Right cardiac atrium (tissue), 5 donors: ENCODE measurements at regions of chr3 and their contacts with region 1.

Region 1: GRCh38 chr3:30453360-30454039 is 152.9 kb upstream of the TGFBR2 start:
- DNase-seq: no peak
- ATAC-seq: peak; percentile 43 to 48
- H3K4me3 ChIP-seq: no peak overlapping the region
- H3K27ac ChIP-seq: no peak overlapping the region
- H3K4me1 ChIP-seq: peaks cover 1% of the 10 kb centered on the region
- H3K27me3 ChIP-seq: no peaks in the 10 kb centered on the region

Region 2: GRCh38 chr3:30347679-30348216 is 105.8 kb before region 1 on chr3:
- intact Hi-C with region 1: loop called in 1 of 4 experiments (anchors 10 kb)
- DNase-seq: no peak
- ATAC-seq: no peak
- H3K4me3 ChIP-seq: no peak overlapping the region
- H3K27ac ChIP-seq: no peak overlapping the region
- H3K4me1 ChIP-seq: peaks cover 1% of the 10 kb centered on the region
- H3K27me3 ChIP-seq: no peaks in the 10 kb centered on the region

Region 3: DNA sequence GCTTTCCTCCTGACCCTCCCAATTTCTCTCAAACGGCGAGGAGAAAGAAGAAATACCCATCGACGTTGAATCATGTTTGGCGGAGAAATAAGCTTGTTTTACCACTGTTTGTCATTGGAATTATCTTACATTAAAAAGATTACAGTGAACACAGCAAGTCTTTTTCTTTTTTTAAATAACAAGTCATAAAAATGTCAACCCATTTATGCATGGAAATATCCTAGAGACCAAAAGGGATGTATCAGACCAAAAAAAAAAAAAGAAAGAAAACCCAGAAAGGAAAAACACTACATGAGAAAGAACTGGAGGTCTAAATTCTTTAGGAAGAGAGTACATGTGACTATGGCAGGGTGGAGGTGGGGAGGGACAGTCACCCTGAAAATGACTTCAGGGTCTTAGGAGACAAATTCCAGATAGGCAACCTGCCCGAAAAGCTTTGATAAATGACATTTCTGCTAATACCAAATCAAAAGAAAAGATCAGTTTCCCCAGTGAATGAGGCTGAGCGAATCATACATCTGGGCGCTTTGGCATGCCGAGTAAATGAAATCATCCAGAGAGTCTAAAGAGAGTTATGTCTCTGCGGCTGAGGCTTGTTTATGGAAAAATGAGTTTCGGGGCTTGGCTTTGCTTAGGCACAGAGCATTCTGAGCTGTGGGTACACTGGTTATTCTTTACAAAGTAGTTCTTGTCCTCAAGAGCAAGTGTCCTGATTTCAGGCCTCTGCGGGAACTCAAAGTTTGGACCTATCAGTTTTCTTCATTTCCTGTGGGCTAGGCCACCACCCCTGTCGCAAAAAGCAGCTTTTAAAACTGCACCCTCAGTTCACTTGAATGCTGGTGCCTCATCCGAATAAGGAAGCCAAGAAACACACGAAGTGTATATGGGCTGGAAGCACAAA is 42.8 kb after region 1 on chr3:
- intact Hi-C with region 1: no loop called
- DNase-seq: peak in 2 of 3 donors; percentile 46 to 74
- ATAC-seq: peak; percentile 70 to 84
- H3K4me3 ChIP-seq: no peak overlapping the region
- H3K27ac ChIP-seq: peak overlapping the region; percentile 80
- H3K4me1 ChIP-seq: peaks cover 5% of the 10 kb centered on the region
- H3K27me3 ChIP-seq: no peaks in the 10 kb centered on the region

Region 4: GRCh38 chr3:30511524-30512278 is 58.2 kb after region 1 on chr3:
- intact Hi-C with region 1: loop called in 1 of 4 experiments (anchors 10 kb)
- DNase-seq: peak in 1 of 3 donors; percentile 58
- ATAC-seq: peak; percentile 90 to 91
- H3K4me3 ChIP-seq: no peak overlapping the region
- H3K27ac ChIP-seq: no peak overlapping the region
- H3K4me1 ChIP-seq: peaks cover 4% of the 10 kb centered on the region
- H3K27me3 ChIP-seq: no peaks in the 10 kb centered on the region